Psoas muscle (tissue), 8 donors: ENCODE measurements at regions of chr7 and their contacts with region 1.

Region 1: GRCh38 chr7:73433924-73434700 is 534 bp downstream of the FZD9 start:
- DNase-seq: no peak
- ATAC-seq: peak in 1 of 4 donors; percentile 0
- H3K4me3 ChIP-seq: peak overlapping the region; percentile 68
- H3K27ac ChIP-seq: peak overlapping the region; percentile 85
- H3K4me1 ChIP-seq: peaks cover 21% of the 10 kb centered on the region
- H3K27me3 ChIP-seq: no peaks in the 10 kb centered on the region
- CTCF ChIP-seq: no peak

Region 2: GRCh38 chr7:72924733-72925545 is 509.2 kb before region 1 on chr7 and contains the start of gene POM121:
- intact Hi-C with region 1: no loop called
- DNase-seq: peak; percentile 87 to 91
- ATAC-seq: peak; percentile 95 to 99 (median 97)
- H3K4me3 ChIP-seq: peak within 1 kb of the TSS; percentile 91
- H3K27ac ChIP-seq: peak within 1 kb of the TSS; percentile 90
- H3K4me1 ChIP-seq: peaks cover 9% of the 10 kb centered on the region
- H3K27me3 ChIP-seq: no peaks in the 10 kb centered on the region
- CTCF ChIP-seq: no peak
- total RNA-seq, gene POM121: 16.6 to 28.1 (median 21.1) TPM

Region 3: GRCh38 chr7:73308665-73309214 is 125.4 kb before region 1 on chr7 and contains the start of gene NSUN5:
- intact Hi-C with region 1: no loop called
- DNase-seq: peak; percentile 90 to 96
- ATAC-seq: peak; percentile 94 to 99 (median 96)
- H3K4me3 ChIP-seq: peak within 1 kb of the TSS; percentile 85
- H3K27ac ChIP-seq: peak within 1 kb of the TSS; percentile 89
- H3K4me1 ChIP-seq: peaks cover 7% of the 10 kb centered on the region
- H3K27me3 ChIP-seq: no peaks in the 10 kb centered on the region
- CTCF ChIP-seq: no peak
- total RNA-seq, gene NSUN5: 18.2 to 34.0 (median 26.6) TPM

Region 4: DNA sequence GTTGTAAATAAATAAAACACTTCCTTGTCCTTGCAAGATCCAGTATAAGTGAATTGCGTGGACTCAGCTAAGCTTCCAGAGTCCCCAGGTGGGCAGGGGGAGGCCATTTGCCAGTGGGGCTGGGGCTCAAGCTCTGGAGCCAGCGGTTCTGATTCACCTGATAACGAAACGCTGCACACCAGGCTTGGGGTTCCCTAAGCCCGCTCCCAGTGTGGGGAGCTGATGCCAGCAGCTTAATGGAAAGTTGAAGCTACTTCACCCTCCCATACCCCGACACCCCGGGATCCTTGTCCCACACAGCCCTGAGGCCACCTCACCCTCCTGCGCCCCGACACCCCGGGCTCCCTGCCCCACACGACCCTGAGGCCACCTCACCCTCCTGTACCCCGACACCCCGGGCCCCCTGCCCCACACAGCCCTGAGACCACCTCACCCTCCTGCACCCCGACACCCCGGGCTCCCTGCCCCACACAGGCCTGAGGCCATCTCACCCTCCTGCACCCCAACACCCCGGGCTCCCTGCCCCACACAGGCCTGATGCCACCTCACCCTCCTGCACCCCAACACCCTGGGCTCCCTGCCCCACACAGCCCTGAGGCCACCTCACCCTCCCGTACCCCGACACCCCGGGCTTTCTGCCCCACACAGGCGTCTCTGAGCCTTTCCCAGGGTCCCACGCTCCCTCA is 75.4 kb before region 1 on chr7:
- intact Hi-C with region 1: loop called in 1 of 2 experiments (anchors 5 kb)
- DNase-seq: no peak
- ATAC-seq: peak in 3 of 4 donors; percentile 4 to 22 (median 16)
- H3K4me3 ChIP-seq: peak overlapping the region; percentile 59
- H3K27ac ChIP-seq: peak overlapping the region; percentile 75
- H3K4me1 ChIP-seq: peaks cover 4% of the 10 kb centered on the region
- H3K27me3 ChIP-seq: no peaks in the 10 kb centered on the region
- CTCF ChIP-seq: no peak